SK-N-SH (cell line): ENCODE measurements at regions of chr14 and their contacts with region 1.

Region 1: DNA sequence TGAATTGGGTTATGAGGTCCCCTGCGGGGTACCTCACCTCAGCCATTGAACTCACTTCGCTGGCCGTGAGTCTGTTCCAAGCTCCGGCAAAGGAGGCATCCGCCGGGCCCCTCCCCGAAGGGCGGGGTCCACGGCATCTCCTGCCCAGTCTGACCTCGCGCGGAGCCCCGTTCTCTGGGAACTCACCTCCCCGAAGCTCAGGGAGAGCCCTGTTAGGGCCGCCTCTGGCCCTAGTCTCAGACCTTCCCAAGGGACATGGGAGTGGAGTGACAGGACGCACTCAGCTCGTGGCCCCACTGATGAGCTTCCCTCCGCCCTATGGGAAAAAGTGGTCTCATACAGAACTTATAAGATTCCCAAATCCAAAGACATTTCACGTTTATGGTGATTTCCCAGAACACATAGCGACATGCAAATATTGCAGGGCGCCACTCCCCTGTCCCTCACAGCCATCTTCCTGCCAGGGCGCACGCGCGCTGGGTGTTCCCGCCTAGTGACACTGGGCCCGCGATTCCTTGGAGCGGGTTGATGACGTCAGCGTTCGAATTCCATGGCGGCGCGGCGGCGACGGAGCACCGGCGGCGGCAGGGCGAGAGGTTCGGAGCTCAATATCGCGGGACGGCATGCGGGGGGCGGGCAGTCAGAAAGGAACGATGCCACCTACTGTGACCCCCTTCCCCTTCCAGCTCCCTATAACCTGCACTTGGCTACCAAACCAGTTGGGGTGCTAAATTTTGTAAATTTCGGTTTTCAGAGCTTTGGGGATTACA is at the start of gene PARP2:
- DNase-seq: peak; percentile 94
- H3K4me3 ChIP-seq: peak within 1 kb of the TSS; percentile 74 to 99
- H3K27ac ChIP-seq: peak within 1 kb of the TSS; percentile 84 to 95
- H3K4me1 ChIP-seq: no peaks in the 10 kb centered on the region
- H3K27me3 ChIP-seq: no peaks in the 10 kb centered on the region
- CTCF ChIP-seq: no peak
- EP300 ChIP-seq: no peak; a peak in 1 of 4 replicates
- RAD21 ChIP-seq: no peak
- polyA plus RNA-seq, gene PARP2: 21.4 and 23.3 TPM in 2 replicates

Region 2: DNA sequence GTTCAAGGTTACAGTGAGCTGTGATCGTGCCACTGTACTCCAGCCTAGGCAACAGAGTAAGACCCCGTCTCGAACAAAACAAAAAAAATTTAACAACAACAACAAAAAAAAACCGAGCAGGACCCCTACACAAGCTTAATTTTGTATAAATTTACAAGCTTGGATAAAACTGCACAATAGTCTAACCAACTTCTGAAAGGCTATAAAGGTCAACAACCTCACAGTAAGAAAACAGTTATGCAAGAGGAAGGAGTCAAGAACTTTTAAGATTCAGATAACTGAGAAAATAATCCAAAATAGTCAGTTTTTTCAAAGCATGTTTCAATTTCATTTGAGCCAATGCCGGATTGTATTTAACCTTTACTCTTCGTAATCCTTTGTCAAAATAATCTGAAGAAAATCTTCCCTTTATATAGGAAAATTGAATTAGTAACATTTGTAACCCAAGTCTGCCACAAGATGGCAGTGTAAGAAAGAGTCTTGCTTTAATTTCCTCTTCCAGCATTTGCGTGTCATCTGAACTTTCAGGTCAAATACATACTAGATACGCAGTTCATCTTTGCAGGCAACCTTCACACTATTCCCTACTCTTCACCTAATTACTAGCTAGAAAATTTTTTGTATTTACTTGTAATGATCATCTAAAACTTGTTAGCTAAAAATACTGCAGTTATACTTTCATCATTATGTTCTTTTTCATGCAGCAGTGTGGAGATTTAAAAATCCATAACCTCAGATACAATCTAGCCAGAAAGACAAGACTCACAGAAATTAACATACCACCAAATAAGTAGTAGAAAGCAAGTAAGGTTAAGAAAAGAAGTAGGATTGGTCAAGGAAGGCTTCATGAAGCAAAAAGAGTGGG is 16.0 kb before region 1 on chr14:
- CTCF ChIA-PET with region 1: interaction called, 30 read pairs
- POLR2A ChIA-PET with region 1: interaction called, 14 read pairs
- DNase-seq: peak; percentile 55
- H3K4me3 ChIP-seq: no peak overlapping the region
- H3K27ac ChIP-seq: peak overlapping the region; percentile 17 to 55; a peak in 2 of 4 replicates
- H3K4me1 ChIP-seq: peaks cover 0 to 5% of the 10 kb centered on the region in 2 experiments; a peak in 2 of 4 replicates
- H3K27me3 ChIP-seq: no peaks in the 10 kb centered on the region
- CTCF ChIP-seq: peak; percentile 82
- EP300 ChIP-seq: no peak
- RAD21 ChIP-seq: peak; percentile 84

Region 3: GRCh38 chr14:20332788-20333493 is 10.3 kb before region 1 on chr14 and contains the start of gene CCNB1IP1:
- CTCF ChIA-PET with region 1: interaction called, 30 read pairs
- POLR2A ChIA-PET with region 1: interaction called, 14 read pairs
- DNase-seq: peak; percentile 79
- H3K4me3 ChIP-seq: peak within 1 kb of the TSS; percentile 86 to 88
- H3K27ac ChIP-seq: peak within 1 kb of the TSS; percentile 80 to 89
- H3K4me1 ChIP-seq: peaks cover 0 to 5% of the 10 kb centered on the region in 2 experiments; a peak in 2 of 4 replicates
- H3K27me3 ChIP-seq: no peaks in the 10 kb centered on the region
- CTCF ChIP-seq: no peak
- EP300 ChIP-seq: no peak
- RAD21 ChIP-seq: no peak
- polyA plus RNA-seq, gene CCNB1IP1: 35.4 and 48.5 TPM in 2 replicates

Region 4: DNA sequence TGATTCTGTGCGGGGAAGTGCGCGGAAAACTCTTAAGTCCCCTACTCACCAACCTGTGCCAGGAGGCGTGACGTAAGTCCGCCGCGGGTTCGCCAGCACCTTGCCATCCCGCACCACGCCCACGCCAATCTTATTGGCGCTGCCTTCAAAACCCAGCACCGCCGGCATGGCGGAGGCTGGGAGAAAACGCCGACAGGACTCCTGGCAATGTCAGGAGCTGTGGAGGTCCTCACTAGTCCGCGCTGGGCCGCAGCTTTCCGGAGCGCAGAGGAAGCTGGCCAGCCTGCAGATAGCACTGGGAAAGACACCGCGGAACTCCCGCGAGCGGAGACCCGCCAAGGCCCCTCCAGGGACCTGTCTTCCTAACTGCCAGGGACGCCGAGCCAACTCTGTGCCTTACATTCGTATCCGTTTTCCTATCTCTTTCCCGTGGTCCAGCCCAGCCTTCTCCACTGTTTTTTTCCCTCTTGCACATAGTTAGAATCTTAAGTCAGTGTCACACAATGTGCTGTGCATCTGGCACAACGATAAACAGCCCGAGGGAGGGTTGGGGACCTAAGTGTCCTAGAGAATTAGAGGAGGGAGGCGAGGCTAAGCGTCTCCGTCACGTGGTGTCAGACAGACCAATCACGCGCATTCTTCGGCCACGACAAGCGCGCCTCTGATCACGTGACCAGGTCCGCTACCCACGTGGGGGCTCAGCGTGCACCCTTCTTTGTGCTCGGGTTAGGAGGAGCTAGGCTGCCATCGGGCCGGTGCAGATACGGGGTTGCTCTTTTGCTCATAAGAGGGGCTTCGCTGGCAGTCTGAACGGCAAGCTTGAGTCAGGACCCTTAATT is 111.5 kb after region 1 on chr14 and contains the starts of genes APEX1 and OSGEP:
- CTCF ChIA-PET with region 1: no interaction called
- POLR2A ChIA-PET with region 1: interaction called, 23 read pairs
- DNase-seq: peak; percentile 95
- H3K4me3 ChIP-seq: peak within 1 kb of the TSS; percentile 92
- H3K27ac ChIP-seq: peak within 1 kb of the TSS; percentile 92 to 96
- H3K4me1 ChIP-seq: peaks cover 5 to 6% of the 10 kb centered on the region in 2 experiments; a peak in 3 of 4 replicates
- H3K27me3 ChIP-seq: no peaks in the 10 kb centered on the region
- CTCF ChIP-seq: no peak
- EP300 ChIP-seq: no peak
- RAD21 ChIP-seq: no peak; the same call in 1 of the 2 replicates
- polyA plus RNA-seq, gene APEX1: 279 and 291 TPM in 2 replicates
- polyA plus RNA-seq, gene OSGEP: 32.9 and 38.7 TPM in 2 replicates

Region 5: DNA sequence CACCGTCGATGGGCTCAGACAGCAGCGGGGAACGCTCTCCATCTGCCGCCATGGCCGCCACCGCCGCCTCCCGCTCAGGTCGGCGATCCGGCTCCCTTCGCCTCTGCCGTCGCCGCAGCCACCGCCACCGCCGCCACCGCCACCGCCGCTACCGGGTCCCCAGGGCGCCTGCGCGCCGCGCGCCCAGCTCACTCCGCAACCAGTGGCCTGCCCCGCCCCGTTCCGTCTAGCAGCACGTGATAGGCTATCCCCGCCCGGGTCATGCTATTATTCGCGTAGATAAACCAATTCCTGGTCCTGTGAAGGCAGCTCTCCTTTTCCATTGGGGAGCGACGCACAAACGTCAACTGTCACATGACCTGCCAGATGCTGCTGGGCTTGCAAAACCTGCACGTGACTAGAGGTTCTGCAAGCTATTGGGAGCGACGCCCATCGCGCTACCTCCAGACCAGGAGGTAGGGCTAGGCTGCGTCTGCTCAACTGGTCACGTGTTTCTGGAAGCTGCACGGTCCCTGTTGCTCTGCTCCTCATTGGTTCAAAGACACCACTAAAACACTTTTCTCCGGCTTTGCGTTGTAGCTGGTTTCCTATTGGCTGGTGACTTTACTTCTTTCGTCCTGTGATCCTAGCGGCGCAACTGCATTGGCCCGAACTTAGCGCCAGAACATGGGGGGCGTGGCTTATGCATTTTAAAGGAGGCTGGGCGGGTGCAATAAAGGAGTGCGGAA is 118.2 kb after region 1 on chr14 and contains the start of gene PIP4P1:
- CTCF ChIA-PET with region 1: no interaction called
- POLR2A ChIA-PET with region 1: interaction called, 10 read pairs
- DNase-seq: peak; percentile 92
- H3K4me3 ChIP-seq: peak within 1 kb of the TSS; percentile 81 to 92
- H3K27ac ChIP-seq: peak within 1 kb of the TSS; percentile 67 to 82
- H3K4me1 ChIP-seq: peaks cover 9 to 19% of the 10 kb centered on the region in 2 experiments; a peak in 3 of 4 replicates
- H3K27me3 ChIP-seq: no peaks in the 10 kb centered on the region; the same call in 1 of the 2 replicates
- CTCF ChIP-seq: no peak
- EP300 ChIP-seq: peak in 1 of 2 experiments; percentile 41; a peak in 1 of 4 replicates
- RAD21 ChIP-seq: no peak
- polyA plus RNA-seq, gene PIP4P1: 30.7 and 38.9 TPM in 2 replicates

Region 6: GRCh38 chr14:20568393-20568792 is 225.1 kb after region 1 on chr14:
- CTCF ChIA-PET with region 1: no interaction called
- POLR2A ChIA-PET with region 1: no interaction called
- DNase-seq: no peak
- H3K4me3 ChIP-seq: no peak overlapping the region
- H3K27ac ChIP-seq: no peak overlapping the region
- H3K4me1 ChIP-seq: no peaks in the 10 kb centered on the region
- H3K27me3 ChIP-seq: no peaks in the 10 kb centered on the region
- CTCF ChIP-seq: no peak
- EP300 ChIP-seq: no peak
- RAD21 ChIP-seq: no peak